Dorsolateral prefrontal cortex (tissue), 120 donors: ENCODE measurements at regions of chr20 and their contacts with region 1.

Region 1: DNA sequence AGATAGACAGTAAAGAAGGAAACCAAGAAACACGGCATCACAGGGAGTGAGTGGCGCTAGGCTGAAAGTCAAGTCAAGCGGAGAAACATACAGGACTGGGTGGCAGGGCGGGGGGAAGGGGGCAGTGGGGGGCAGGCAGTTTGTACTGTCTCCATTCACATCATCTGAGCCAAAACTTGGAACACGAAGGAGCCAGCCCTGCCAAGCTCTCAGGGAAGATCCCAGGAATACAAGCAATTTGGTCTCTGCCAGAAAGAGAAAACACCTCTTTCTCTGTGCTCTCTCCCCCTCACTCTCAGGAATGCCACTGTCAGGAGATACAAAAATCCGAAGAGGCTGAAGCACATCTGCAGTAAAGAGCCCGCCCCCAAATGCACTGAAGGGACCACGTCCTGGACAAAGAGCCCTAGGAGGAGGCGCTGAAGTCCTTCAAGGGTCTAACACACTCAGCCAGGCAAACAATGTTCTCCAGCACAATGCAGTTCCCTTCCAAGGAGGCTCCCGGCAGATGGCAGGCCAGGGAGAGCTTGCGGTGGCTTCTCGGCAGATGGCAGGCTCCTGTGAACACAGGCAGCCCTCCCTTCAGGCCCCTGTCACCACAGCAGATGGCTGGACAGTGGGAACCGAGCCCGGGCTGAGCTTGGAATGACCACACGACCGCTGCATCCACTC is 90.0 kb downstream of the ATP9A start:
- DNase-seq: peak; percentile 77 to 95 (median 86)
- H3K4me3 ChIP-seq: peak overlapping the region in 6 of 59 donors; percentile 2 to 24 (median 12)
- H3K27ac ChIP-seq: peak overlapping the region in 57 of 59 donors; percentile 3 to 88 (median 69)
- H3K27me3 ChIP-seq: no peaks in the 10 kb centered on the region
- CTCF ChIP-seq: peak in 54 of 56 donors; percentile 33 to 78 (median 60)

Region 2: DNA sequence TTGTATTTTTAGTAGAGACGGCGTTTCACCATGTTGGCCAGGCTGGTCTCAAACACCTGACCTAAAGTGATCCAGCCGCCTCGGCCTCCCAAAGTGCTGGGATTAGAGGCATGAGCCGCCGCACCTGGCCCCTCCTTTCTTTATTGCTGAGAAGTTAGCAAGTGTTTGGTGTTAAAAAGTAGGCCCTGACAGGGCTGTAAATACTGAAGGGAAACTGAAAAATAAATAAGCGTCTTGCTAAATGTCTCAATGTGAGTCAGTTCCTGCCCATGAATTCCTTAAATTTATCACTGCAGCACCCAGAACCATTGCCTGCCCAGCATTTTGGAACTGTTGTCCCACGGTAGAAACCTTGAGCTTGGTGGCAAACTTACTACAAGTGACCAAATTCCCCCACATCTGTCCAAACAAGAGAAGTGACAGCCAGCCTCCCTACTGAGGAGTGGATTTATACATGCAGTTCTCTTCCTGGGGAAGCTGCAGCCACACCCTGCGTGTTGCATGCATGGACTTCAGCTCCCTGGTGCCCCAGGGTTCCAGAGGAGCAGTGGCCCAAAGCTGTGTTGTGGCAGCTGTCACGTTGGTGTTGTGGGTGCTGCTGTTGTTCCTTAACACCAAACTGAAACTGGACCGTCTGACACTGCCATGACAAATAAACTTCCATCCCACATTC is 64.7 kb after region 1 on chr20:
- intact Hi-C with region 1: loop called in 1 of 2 experiments (anchors 5 kb)
- DNase-seq: no peak
- H3K4me3 ChIP-seq: peak overlapping the region in 32 of 59 donors; percentile 1 to 51 (median 24)
- H3K27ac ChIP-seq: peak overlapping the region; percentile 55 to 97 (median 86)
- H3K27me3 ChIP-seq: no peaks in the 10 kb centered on the region
- CTCF ChIP-seq: peak in 1 of 56 donors; percentile 1